T-cell (primary cell): ENCODE measurements at regions of chr2 and their contacts with region 1.

Region 1: DNA sequence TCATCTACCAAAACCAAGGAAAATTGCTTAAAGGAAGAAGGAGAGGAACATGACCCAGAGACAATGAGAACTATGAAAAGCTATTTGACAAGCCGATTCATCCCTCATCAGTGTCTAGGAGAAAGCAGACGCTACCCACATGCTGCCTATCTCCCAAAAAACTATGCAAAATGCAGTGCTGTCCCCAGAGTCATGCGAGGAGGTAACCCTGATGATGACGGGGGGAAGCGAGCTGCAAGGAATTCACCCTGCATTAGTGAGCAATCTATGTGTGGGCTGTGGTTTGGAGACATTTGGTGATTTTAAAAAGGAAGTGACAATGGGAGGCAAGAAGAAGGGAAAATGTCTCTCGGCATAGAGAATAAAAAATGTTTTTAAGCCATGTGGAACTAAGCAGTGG is 472.7 kb downstream of the CMPK2 start:
- DNase-seq: no peak
- ATAC-seq: no peak
- H3K4me3 ChIP-seq: no peak overlapping the region
- H3K4me3 Mint-ChIP-seq: no peak overlapping the region
- H3K27ac ChIP-seq: no peak overlapping the region
- H3K27ac Mint-ChIP-seq: no peak overlapping the region
- H3K4me1 ChIP-seq: no peaks in the 10 kb centered on the region
- H3K4me1 Mint-ChIP-seq: no peaks in the 10 kb centered on the region
- H3K27me3 ChIP-seq: no peaks in the 10 kb centered on the region
- H3K27me3 Mint-ChIP-seq: peaks cover 0 to 4% of the 10 kb centered on the region in 2 donors

Region 2: GRCh38 chr2:6011921-6012320 is 381.0 kb before region 1 on chr2:
- CTCF ChIA-PET with region 1: no interaction called
- POLR2A ChIA-PET with region 1: interaction called in 1 of 2 experiments, 11 read pairs
- DNase-seq: no peak
- ATAC-seq: no peak
- H3K4me3 ChIP-seq: no peak overlapping the region
- H3K4me3 Mint-ChIP-seq: no peak overlapping the region
- H3K27ac ChIP-seq: no peak overlapping the region
- H3K27ac Mint-ChIP-seq: no peak overlapping the region
- H3K4me1 ChIP-seq: no peaks in the 10 kb centered on the region
- H3K4me1 Mint-ChIP-seq: no peaks in the 10 kb centered on the region
- H3K27me3 ChIP-seq: no peaks in the 10 kb centered on the region
- H3K27me3 Mint-ChIP-seq: no peaks in the 10 kb centered on the region

Region 3: GRCh38 chr2:6381326-6381725 is 11.6 kb before region 1 on chr2:
- CTCF ChIA-PET with region 1: no interaction called
- POLR2A ChIA-PET with region 1: no interaction called
- DNase-seq: no peak
- ATAC-seq: no peak
- H3K4me3 ChIP-seq: no peak overlapping the region
- H3K4me3 Mint-ChIP-seq: no peak overlapping the region
- H3K27ac ChIP-seq: no peak overlapping the region
- H3K27ac Mint-ChIP-seq: no peak overlapping the region
- H3K4me1 ChIP-seq: no peaks in the 10 kb centered on the region
- H3K4me1 Mint-ChIP-seq: no peaks in the 10 kb centered on the region
- H3K27me3 ChIP-seq: no peaks in the 10 kb centered on the region
- H3K27me3 Mint-ChIP-seq: no peaks in the 10 kb centered on the region

Region 4: GRCh38 chr2:6605836-6606505 is 213.0 kb after region 1 on chr2:
- CTCF ChIA-PET with region 1: no interaction called
- POLR2A ChIA-PET with region 1: no interaction called
- DNase-seq: no peak
- ATAC-seq: no peak
- H3K4me3 ChIP-seq: no peak overlapping the region
- H3K4me3 Mint-ChIP-seq: no peak overlapping the region
- H3K27ac ChIP-seq: no peak overlapping the region
- H3K27ac Mint-ChIP-seq: no peak overlapping the region
- H3K4me1 ChIP-seq: no peaks in the 10 kb centered on the region
- H3K4me1 Mint-ChIP-seq: no peaks in the 10 kb centered on the region
- H3K27me3 ChIP-seq: no peaks in the 10 kb centered on the region
- H3K27me3 Mint-ChIP-seq: peaks cover 0 to under 1% of the 10 kb centered on the region in 2 donors